SK-N-SH (cell line): ENCODE measurements at regions of chr20 and their contacts with region 1.

Region 1: DNA sequence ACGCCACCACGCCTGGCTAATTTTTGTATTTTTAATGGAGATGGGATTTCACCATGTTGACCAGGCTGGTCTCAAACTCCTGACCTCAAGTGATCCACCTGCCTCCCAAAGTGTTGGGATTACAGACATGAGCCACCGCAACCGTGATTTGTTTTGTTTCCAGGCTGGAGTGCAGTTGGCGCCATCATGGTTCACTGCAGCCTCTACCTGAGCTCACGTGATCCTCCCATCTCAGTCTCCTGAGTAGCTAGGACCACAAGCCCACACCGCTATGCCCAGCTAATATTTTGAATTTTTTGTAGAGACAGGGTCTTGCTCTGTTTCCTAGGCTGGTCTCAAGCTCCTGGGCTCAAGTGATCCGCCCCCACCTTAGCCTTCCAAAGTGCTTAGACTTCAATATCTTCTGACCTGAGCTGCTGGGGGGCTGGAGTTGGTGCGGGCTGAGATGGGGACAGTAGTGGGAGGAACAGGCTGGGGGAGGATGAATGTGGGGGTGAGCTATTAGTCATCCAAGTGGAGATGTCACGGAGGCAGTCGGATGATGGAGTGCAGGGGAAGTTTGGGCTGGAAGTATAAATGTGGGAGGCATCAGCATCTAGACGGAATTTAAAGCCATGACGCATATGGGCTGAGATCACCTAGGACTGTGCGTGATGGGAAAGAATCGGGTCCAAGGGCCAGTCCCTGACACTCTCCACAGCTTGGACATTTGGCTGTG is 23.1 kb upstream of the ZMYND8 start:
- DNase-seq: no peak
- H3K4me3 ChIP-seq: no peak overlapping the region
- H3K27ac ChIP-seq: peak overlapping the region in 1 of 2 experiments; percentile 69; a peak in 2 of 4 replicates
- H3K4me1 ChIP-seq: peaks cover 3 to 15% of the 10 kb centered on the region in 2 experiments; a peak in 3 of 4 replicates
- H3K27me3 ChIP-seq: no peaks in the 10 kb centered on the region
- CTCF ChIP-seq: no peak
- EP300 ChIP-seq: peak in 1 of 2 experiments; percentile 88; a peak in 2 of 4 replicates
- RAD21 ChIP-seq: no peak

Region 2: DNA sequence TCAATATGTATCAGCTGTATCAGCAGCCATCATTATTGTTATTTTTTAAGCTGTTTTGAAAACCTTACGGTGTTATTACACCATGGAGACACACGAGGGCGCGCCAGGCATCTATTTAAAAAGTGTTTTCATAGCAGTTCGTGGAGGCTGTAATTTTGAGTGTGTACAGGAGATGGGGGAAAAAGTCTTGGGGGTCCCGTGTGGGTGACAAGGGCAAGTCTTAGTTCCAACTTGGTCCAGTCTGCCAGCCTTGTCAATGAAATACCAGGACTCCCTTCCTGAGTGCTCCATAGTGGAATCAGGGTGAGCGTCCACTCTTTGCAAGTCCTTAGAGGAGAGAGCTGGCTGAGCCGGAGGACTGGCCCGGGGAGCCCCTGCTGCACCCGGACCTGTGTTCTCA is 626.9 kb before region 1 on chr20:
- CTCF ChIA-PET with region 1: interaction called, 22 read pairs
- POLR2A ChIA-PET with region 1: no interaction called
- DNase-seq: peak; percentile 60
- H3K4me3 ChIP-seq: no peak overlapping the region; a peak in 1 of 4 replicates
- H3K27ac ChIP-seq: no peak overlapping the region
- H3K4me1 ChIP-seq: no peaks in the 10 kb centered on the region
- H3K27me3 ChIP-seq: no peaks in the 10 kb centered on the region
- CTCF ChIP-seq: peak; percentile 85
- EP300 ChIP-seq: no peak
- RAD21 ChIP-seq: peak; percentile 79

Region 3: DNA sequence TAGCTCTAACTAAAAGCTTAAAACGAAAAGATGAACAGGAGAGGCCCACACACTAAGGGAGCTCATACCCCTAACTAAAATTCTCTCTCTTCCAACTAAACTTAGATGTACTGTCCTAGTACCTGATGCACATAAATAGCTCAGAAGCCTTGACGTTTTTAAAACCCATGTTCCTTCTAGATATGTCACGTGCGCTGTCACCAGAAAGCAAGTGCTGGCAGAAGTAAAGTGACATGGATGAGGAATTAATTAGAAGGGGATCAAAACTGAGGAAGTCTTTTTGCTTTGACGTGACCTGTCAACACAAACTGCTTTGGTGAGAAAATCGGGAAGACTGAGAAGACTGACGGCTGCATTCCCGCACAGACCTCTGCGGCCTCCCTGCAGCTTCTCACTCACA is 165.6 kb before region 1 on chr20:
- CTCF ChIA-PET with region 1: interaction called, 54 read pairs
- POLR2A ChIA-PET with region 1: no interaction called
- DNase-seq: no peak
- H3K4me3 ChIP-seq: no peak overlapping the region
- H3K27ac ChIP-seq: no peak overlapping the region
- H3K4me1 ChIP-seq: no peaks in the 10 kb centered on the region
- H3K27me3 ChIP-seq: no peaks in the 10 kb centered on the region
- CTCF ChIP-seq: no peak
- EP300 ChIP-seq: no peak
- RAD21 ChIP-seq: no peak

Region 4: DNA sequence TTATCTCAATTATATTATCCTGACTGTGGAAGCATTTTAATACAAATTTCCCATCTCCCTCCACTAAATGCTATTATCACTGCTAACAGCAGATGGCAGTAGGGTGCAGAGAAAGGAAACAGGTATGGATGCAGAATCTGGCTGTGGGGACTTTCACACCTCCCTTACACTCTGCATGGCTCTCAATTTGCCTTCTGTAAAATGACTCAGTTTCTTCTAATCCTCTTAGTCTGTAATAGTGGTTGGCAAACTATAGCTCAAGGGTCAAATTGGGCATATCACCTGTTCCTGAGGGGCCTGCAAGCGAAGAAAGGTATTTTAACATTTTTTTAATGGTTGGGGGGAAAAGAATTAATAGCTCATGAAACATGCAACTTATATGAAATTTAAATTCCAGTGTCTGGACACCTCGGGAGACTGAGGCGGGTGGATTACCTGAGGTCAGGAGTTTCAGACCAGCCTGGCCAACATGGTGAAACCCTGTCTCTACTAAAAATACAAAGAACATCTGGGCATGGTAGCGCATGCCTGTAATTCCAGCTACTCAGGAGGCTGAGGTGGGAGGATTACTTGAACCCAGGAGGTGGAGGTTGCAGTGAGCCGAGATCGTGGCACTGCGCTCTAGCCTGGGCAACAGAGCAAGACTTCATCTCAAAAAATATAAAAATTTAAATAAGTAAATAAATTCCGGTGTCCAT is 106.5 kb before region 1 on chr20:
- CTCF ChIA-PET with region 1: interaction called, 546 read pairs
- POLR2A ChIA-PET with region 1: interaction called, 5 read pairs
- DNase-seq: peak; percentile 73
- H3K4me3 ChIP-seq: no peak overlapping the region; a peak in 1 of 4 replicates
- H3K27ac ChIP-seq: peak overlapping the region in 1 of 2 experiments; percentile 97; a peak in 2 of 4 replicates
- H3K4me1 ChIP-seq: peaks cover 20 to 48% of the 10 kb centered on the region in 2 experiments
- H3K27me3 ChIP-seq: no peaks in the 10 kb centered on the region
- CTCF ChIP-seq: peak; percentile 95
- EP300 ChIP-seq: no peak
- RAD21 ChIP-seq: peak; percentile 95

Region 5: GRCh38 chr20:47356526-47357295 is 22.9 kb before region 1 on chr20 and contains the start of gene ZMYND8:
- CTCF ChIA-PET with region 1: interaction called, 75 read pairs
- POLR2A ChIA-PET with region 1: interaction called, 4 read pairs
- DNase-seq: peak; percentile 87
- H3K4me3 ChIP-seq: peak within 1 kb of the TSS; percentile 42 to 52
- H3K27ac ChIP-seq: peak within 1 kb of the TSS; percentile 97 to 100
- H3K4me1 ChIP-seq: peaks cover 75 to 89% of the 10 kb centered on the region in 2 experiments
- H3K27me3 ChIP-seq: no peaks in the 10 kb centered on the region
- CTCF ChIP-seq: no peak
- EP300 ChIP-seq: no peak
- RAD21 ChIP-seq: no peak
- polyA plus RNA-seq, gene ZMYND8: 20.6 and 25.3 TPM in 2 replicates

Region 6: DNA sequence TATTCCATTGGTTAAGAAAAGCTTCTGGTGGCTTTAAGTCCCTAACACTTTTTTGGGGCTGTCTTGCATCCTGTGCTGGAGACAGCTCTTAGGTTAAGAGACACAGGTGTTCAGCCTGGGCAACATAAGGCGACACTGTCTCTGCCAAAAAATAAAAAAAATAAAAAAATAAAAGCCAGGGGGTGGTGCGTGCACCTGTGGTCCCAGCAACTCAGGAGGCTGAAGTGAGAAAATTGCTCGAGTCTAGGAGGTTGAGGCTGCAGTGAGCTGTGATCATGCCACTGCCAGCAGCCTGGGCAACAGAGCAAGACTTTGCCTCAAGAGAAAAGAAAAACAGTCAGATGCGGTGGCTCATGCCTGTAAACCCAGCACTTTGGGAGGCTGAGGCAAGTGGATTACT is 32.5 kb after region 1 on chr20:
- CTCF ChIA-PET with region 1: interaction called, 10 read pairs
- POLR2A ChIA-PET with region 1: no interaction called
- DNase-seq: no peak
- H3K4me3 ChIP-seq: no peak overlapping the region
- H3K27ac ChIP-seq: no peak overlapping the region
- H3K4me1 ChIP-seq: no peaks in the 10 kb centered on the region
- H3K27me3 ChIP-seq: no peaks in the 10 kb centered on the region
- CTCF ChIP-seq: no peak
- EP300 ChIP-seq: no peak
- RAD21 ChIP-seq: no peak

Region 7: GRCh38 chr20:47631078-47631477 is 251.5 kb after region 1 on chr20:
- CTCF ChIA-PET with region 1: interaction called, 20 read pairs
- POLR2A ChIA-PET with region 1: no interaction called
- DNase-seq: no peak
- H3K4me3 ChIP-seq: no peak overlapping the region
- H3K27ac ChIP-seq: no peak overlapping the region
- H3K4me1 ChIP-seq: no peaks in the 10 kb centered on the region; a peak in 1 of 4 replicates
- H3K27me3 ChIP-seq: no peaks in the 10 kb centered on the region
- CTCF ChIP-seq: no peak
- EP300 ChIP-seq: no peak
- RAD21 ChIP-seq: no peak